Gastrocnemius medialis (tissue), 4 donors: ENCODE measurements at regions of chr4 and their contacts with region 1.

Region 1: DNA sequence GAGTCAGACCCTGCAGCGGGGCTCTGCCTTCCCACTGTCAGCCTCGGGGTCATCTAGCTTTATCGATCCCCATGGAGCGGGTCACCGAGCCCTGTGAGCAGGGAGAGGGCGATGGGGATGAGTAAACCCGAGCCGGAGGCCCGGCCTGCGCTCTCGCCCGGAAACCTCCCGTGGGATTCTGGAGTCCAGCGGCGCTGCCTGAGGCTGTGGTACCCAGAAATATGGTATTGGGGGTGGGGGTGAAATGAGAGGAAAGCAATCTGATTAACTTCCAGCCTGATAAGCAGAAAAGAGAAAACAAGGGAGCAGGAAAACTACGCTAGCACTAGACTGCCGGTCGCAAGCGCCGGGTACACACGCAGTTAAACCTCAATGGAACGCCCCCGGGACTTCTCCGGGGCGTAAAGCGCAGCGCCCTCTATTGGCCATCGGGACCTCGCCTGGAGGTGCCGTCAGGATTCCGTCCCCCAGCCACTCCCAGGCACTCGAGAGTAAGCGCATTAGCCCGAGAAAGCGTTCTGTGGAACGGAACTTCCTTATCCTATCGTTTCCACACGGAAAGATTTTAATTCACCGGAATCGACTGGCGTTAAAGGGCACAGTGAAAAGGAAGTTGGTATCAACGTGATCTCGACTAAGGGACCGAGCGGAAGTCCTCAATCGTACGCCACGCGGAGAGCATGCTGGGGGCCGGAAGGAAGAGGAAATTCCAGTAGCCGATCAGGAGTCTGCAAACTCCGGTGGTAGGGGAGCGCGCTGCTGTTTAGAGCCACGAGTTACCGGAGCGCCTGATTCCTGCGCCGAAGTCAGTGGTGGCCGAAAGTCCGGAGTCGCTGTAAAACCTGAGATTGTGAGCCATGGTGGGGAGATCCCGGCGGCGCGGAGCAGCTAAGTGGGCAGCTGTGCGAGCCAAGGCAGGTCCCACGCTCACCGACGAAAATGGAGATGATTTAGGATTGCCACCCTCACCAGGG is at the start of gene UTP3:
- DNase-seq: peak; percentile 92 to 93
- ATAC-seq: peak; percentile 98
- H3K4me3 ChIP-seq: peak within 1 kb of the TSS; percentile 82 to 93 (median 90)
- H3K27ac ChIP-seq: peak within 1 kb of the TSS; percentile 90 to 96 (median 94)
- H3K4me1 ChIP-seq: peaks cover 27 to 37% of the 10 kb centered on the region in 2 donors
- H3K27me3 ChIP-seq: no peaks in the 10 kb centered on the region
- CTCF ChIP-seq: peak; percentile 92 to 98 (median 96)
- POLR2A ChIP-seq: peak; percentile 71 to 80
- total RNA-seq, gene UTP3: 6.3 to 13.0 (median 11.8) TPM

Region 2: GRCh38 chr4:70637239-70637913 is 50.7 kb before region 1 on chr4:
- in situ Hi-C with region 1: no loop called
- intact Hi-C with region 1: loop called (anchors 5 kb)
- DNase-seq: no peak
- ATAC-seq: peak; percentile 92 to 93
- H3K4me3 ChIP-seq: peak overlapping the region; percentile 34 to 50 (median 42)
- H3K27ac ChIP-seq: peak overlapping the region; percentile 78 to 87 (median 82)
- H3K4me1 ChIP-seq: peaks cover 14 to 21% of the 10 kb centered on the region in 2 donors
- H3K27me3 ChIP-seq: no peaks in the 10 kb centered on the region
- CTCF ChIP-seq: no peak
- POLR2A ChIP-seq: no peak

Region 3: GRCh38 chr4:70704331-70705145 is 16.4 kb after region 1 on chr4:
- in situ Hi-C with region 1: no loop called
- intact Hi-C with region 1: loop called (anchors 1 kb)
- DNase-seq: peak; percentile 65 to 80
- ATAC-seq: peak; percentile 67 to 72
- H3K4me3 ChIP-seq: peak overlapping the region; percentile 72 to 94 (median 80)
- H3K27ac ChIP-seq: peak overlapping the region; percentile 93 to 98 (median 96)
- H3K4me1 ChIP-seq: peaks cover 16 to 24% of the 10 kb centered on the region in 2 donors
- H3K27me3 ChIP-seq: no peaks in the 10 kb centered on the region
- CTCF ChIP-seq: peak in 2 of 5 experiments; percentile 45 to 48
- POLR2A ChIP-seq: peak in 1 of 2 donors; percentile 48

Region 4: GRCh38 chr4:70901984-70902576 is 214.0 kb after region 1 on chr4 and contains the start of gene MOB1B:
- in situ Hi-C with region 1: no loop called
- intact Hi-C with region 1: loop called (anchors 1 kb)
- DNase-seq: peak; percentile 74 to 77
- ATAC-seq: peak; percentile 96
- H3K4me3 ChIP-seq: peak within 1 kb of the TSS; percentile 73 to 96 (median 91)
- H3K27ac ChIP-seq: peak within 1 kb of the TSS; percentile 79 to 90 (median 87)
- H3K4me1 ChIP-seq: peaks cover 5 to 10% of the 10 kb centered on the region in 2 donors
- H3K27me3 ChIP-seq: no peaks in the 10 kb centered on the region
- CTCF ChIP-seq: peak in 4 of 5 experiments; percentile 15 to 58 (median 34)
- POLR2A ChIP-seq: peak; percentile 26 to 47
- total RNA-seq, gene MOB1B: 6.5 to 17.5 (median 8.4) TPM